ENCODE measurements at regions of chr19 and their contacts with region 1.

Region 1: DNA sequence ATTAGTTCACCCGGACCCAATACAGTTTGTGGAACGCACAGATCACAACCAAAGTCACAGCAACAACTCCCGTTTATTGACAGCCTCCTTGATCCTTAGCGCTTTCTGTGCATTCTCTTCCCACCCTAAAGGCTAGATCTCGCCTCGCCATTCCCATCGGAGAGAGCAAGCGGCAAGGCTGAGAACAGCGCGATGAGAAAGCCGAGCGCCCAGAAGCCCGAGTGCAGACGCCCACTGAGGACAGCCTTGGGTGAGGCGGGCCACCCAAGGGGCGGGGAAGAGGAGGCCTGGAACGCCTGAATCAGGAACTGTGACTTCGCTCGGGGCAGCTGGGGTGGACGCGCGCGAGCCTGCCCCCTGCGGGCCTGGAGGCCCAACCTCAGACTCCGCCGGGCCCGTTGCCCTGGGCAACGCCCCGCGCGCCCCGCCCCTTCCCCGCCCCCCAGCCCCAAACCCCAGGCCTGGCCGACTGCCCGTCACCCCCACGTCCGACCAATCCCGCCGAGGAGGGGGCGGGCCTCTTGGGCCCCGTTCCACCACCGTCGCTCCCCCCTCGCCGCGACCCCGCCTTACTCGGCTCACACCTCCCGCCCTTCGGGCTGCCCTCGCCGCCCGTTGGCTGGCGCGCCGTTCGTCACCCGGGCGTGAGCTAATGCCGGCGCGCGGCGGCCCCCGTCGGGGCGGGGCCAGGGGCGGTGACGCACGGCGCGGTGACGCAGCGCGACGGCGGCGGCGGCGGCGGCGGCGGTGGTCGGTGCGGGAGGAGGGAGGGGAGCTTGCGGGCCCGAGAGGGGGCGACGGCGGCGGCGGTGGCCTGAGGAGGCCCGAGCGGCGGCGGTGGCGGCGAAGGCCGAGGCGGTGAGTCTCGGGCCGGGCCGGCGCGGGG is at the start of gene SAMD4B:
- DNase-seq: peak; percentile 97 to 100 (median 98)
- H3K4me3 ChIP-seq: peak within 1 kb of the TSS; percentile 62 to 98 (median 85)
- H3K27ac ChIP-seq: peak within 1 kb of the TSS; percentile 59 to 99 (median 91)
- H3K27me3 ChIP-seq: no peaks in the 10 kb centered on the region
- CTCF ChIP-seq: peak; percentile 82 to 98 (median 92)
- total RNA-seq, gene SAMD4B: 107 to 294 (median 153) TPM

Region 2: GRCh38 chr19:39246951-39247669 is 94.9 kb before region 1 on chr19:
- intact Hi-C with region 1: no loop called
- DNase-seq: peak in 6 of 10 donors; percentile 21 to 58 (median 46)
- H3K4me3 ChIP-seq: peak overlapping the region in 56 of 59 donors; percentile 7 to 59 (median 36)
- H3K27ac ChIP-seq: no peak overlapping the region
- H3K27me3 ChIP-seq: peaks cover 0 to 43% (median 20%) of the 10 kb centered on the region in 45 donors
- CTCF ChIP-seq: no peak

Region 3: DNA sequence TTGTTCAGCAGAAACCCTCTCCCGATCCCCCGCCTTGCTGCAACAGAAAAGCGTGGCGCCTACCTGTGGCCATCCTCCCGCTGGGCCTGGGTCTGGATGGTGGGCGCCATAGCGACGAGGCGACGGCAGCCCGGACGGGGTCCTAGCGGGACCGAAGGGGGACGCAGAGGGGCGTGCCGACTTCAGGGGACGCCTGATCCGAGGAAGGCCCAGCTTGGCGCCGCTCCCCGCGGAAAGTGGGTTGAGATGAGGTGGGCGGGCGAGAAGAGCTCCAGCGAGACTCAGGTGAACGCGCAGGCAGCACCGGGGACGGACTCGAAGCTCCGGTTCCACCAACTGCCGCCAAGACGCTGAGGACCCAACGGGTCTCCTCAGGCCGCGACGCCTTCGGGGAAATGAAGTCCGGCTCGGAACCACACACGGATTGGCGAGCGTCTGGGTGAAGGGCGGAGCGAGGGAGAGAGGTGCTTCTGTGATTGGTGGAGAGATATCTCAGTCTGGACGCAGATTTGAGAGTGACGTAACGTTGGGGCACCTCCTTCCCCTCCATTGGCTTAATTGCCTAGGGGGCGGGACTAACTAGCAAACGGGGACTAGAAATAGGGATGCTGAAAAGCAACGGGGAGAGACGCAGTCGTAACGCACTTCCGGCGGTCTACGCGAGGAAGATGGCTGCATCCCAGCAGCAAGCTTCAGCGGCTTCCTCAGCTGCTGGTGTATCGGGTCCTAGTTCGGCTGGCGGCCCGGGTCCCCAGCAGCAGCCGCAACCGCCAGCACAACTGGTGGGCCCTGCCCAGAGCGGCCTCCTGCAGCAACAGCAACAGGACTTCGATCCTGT is 49.0 kb after region 1 on chr19 and contains the starts of genes MED29 and PAF1:
- intact Hi-C with region 1: loop called (anchors 2 kb)
- DNase-seq: peak; percentile 88 to 99 (median 98)
- H3K4me3 ChIP-seq: peak within 1 kb of the TSS; percentile 77 to 100 (median 96)
- H3K27ac ChIP-seq: peak within 1 kb of the TSS; percentile 55 to 100 (median 97)
- H3K27me3 ChIP-seq: no peaks in the 10 kb centered on the region
- CTCF ChIP-seq: peak in 22 of 56 donors; percentile 2 to 52 (median 24)
- total RNA-seq, gene MED29: 41.8 to 99.7 (median 69.9) TPM
- total RNA-seq, gene PAF1: 33.5 to 65.7 (median 46.2) TPM

Region 4: DNA sequence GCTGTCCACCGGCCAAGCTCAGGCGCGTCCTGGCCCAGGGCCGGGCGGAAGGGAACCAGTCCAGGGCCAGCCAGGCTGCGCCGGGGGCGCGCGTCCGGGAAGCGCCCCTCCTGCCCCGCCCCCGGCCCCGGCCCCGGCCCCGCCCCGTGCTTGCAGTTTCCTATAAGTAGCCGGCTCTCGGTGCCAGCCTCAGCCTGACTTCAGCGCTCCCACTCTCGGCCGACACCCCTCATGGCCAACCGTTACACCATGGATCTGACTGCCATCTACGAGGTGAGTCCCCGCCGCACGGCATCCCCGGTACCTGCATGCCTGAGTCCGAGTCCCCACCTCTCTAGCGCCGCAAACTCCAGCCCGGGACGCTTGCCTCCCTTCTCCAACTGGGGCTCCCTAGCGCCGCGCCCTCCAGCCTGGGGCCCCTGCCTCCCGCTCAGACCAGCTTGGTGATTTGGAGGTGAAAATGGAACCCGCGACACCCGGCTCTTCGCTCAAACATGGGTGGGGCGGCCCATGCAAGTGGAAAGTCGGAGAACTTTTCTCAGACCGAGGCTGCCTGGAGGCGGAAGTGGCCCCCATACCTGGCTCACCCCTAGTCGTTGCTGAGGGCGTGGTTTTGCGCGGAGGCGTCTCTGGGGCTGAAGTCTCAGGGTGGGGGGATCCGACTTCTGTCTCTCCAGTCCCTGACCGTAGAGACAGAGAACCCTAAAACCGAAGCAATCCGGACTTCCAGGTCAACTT is 64.9 kb after region 1 on chr19 and contains the start of gene ZFP36:
- intact Hi-C with region 1: loop called in 1 of 2 experiments (anchors 5 kb)
- DNase-seq: peak; percentile 44 to 88 (median 82)
- H3K4me3 ChIP-seq: peak within 1 kb of the TSS; percentile 49 to 96 (median 78)
- H3K27ac ChIP-seq: peak within 1 kb of the TSS; percentile 65 to 98 (median 93)
- H3K27me3 ChIP-seq: peaks cover 0 to 10% (median 0%) of the 10 kb centered on the region in 45 donors
- CTCF ChIP-seq: no peak
- total RNA-seq, gene ZFP36: 7.0 to 246 (median 38.2) TPM

Region 5: DNA sequence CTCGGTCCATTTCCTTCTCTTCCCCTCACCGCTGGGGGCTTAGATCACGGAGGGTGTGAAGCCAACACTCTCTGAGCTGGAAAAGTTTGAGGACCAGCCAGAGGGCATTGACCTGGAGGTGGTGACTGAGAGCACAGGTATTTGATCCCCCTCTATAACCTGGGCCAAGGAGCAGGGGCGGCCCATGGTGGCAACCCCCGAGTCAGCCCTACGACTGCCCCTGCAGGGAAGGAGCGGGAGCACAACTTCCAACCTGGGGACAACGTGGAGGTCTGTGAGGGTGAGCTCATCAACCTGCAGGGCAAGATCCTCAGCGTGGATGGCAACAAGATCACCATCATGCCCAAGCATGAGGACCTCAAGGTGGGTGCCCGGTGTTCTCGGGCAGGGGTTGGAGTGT is 127.1 kb after region 1 on chr19:
- intact Hi-C with region 1: no loop called
- DNase-seq: no peak
- H3K4me3 ChIP-seq: no peak overlapping the region
- H3K27ac ChIP-seq: no peak overlapping the region
- H3K27me3 ChIP-seq: no peaks in the 10 kb centered on the region
- CTCF ChIP-seq: no peak